CD4-positive, alpha-beta memory T cell (primary cell): ENCODE measurements at regions of chr15 and their contacts with region 1.

Region 1: DNA sequence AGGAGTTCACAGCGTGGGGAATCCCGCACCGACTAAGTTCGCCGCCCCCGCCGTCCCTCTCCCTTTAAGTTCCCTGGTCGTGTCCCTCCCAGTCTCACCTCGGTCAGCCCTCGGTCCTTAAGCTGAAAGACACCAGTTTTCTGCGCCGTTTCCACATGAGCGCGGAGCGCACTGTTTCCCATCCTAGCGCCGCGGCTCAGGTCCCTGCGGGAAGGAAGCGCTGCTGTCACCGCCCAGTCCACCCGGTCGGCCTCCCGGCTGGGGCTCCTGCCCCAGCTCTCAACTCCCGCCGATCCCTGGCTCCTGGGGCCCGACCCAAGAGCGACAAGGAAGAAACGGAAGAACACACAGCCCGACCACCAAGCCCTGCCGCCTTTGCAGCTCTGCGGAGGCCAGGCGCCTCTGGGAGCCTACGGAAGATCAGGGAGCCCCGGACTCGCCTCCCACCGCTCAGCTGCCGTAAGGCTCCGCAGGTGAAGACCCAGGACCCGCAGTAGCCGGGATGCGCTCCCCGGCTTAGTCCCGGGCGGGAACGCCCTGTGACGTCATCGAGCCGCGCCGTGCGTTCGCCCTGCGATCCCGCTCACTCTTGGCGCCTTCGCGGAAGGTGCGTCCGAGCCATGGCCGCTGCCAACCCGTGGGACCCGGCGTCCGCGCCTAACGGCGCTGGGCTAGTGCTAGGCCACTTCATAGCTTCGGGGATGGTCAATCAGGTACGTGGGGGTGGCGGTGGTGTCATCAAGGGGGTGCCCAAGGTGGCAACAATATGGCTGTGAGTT is at the starts of genes HAUS2 and LRRC57:
- DNase-seq: peak; percentile 85 to 89 (median 86)
- H3K4me3 ChIP-seq: peak within 1 kb of the TSS; percentile 92 to 99
- H3K4me3 Mint-ChIP-seq: peak within 1 kb of the TSS; percentile 93 to 100 (median 96)
- H3K27ac ChIP-seq: peak within 1 kb of the TSS; percentile 88
- H3K27ac Mint-ChIP-seq: peak within 1 kb of the TSS; percentile 87 to 100 (median 98)
- H3K4me1 ChIP-seq: peaks cover 52% of the 10 kb centered on the region
- H3K4me1 Mint-ChIP-seq: peaks cover 36 to 71% (median 53%) of the 10 kb centered on the region in 4 donors
- H3K27me3 ChIP-seq: no peaks in the 10 kb centered on the region
- H3K27me3 Mint-ChIP-seq: no peaks in the 10 kb centered on the region
- total RNA-seq, gene HAUS2: 16.4 to 20.0 TPM
- total RNA-seq, gene LRRC57: 19.0 to 20.0 TPM

Region 2: DNA sequence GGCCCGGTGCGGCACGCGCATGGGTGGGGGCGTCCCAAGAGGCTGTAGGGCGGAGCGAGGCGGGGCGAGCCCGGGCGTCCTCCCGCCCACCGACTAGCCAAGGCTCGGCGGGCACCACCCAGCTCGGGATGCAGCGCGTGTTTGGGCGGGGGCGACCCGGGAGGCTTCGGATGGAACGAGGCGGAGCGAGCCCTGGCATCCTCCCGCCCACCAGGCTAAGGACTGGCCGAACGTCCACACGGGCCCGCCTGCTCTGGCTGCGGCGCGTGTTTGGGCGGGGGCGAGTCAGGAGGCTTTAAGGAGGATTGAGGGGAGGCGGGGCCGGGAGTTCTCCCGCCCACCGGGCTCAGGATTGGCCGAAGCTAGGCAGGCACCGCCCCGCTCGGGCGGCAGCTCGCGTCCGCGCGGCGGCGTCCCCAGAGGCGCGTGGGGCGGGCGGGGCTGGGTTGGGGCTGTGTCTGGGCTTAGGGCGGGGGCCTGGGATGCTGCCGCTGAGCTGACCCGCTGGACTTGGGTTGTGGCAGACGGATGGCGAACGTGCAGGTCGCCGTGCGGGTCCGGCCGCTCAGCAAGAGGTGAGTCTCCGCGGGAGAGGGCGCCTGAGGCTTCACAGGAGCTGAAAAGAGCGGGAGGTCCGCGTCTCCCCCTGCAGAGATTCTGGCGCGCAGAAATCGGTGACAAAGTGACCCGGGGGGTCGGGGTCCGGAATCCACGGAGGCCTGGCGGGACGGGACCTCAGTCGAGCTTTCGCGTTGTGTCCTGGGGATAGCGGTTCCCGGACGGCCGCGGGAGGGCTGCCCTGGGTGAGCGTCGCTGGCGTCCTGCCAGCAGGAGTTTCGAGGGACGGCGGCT is 27.0 kb after region 1 on chr15 and contains the start of gene STARD9:
- CTCF ChIA-PET with region 1: no interaction called
- POLR2A ChIA-PET with region 1: interaction called, 60 read pairs
- intact Hi-C with region 1: loop called (anchors 1 kb)
- DNase-seq: peak; percentile 93 to 95 (median 93)
- H3K4me3 ChIP-seq: peak within 1 kb of the TSS; percentile 78 to 89
- H3K4me3 Mint-ChIP-seq: peak within 1 kb of the TSS; percentile 89 to 96 (median 92)
- H3K27ac ChIP-seq: peak within 1 kb of the TSS; percentile 44
- H3K27ac Mint-ChIP-seq: peak within 1 kb of the TSS; percentile 78 to 94 (median 86)
- H3K4me1 ChIP-seq: peaks cover 16% of the 10 kb centered on the region
- H3K4me1 Mint-ChIP-seq: peaks cover 11 to 34% (median 17%) of the 10 kb centered on the region in 4 donors
- H3K27me3 ChIP-seq: no peaks in the 10 kb centered on the region
- H3K27me3 Mint-ChIP-seq: peaks cover 6 to 12% of the 10 kb centered on the region in 2 donors
- total RNA-seq, gene STARD9: 4.5 to 6.1 TPM

Region 3: DNA sequence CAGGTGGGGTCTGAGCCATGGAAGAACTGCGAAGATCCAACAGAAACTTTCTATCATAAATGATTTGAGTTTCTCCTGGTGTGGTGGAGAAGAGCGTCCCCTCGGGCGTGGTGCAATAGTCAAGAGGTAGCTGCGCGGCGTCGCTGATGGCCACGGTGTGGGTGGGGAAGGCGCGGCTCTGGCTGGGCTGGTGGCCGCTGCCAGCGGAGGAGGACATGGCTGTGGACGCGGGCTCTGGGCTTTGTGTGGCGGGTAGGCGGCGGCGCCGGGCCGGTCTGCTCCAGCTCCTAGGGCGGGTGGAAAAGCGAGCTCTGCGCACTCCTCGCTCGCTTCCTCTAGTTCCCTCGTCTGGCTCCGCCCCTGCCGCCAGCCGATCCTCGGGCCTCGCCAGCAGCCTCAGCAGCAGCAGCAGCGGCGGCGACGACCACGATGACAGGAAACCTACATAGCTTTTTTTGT is 32.9 kb after region 1 on chr15:
- CTCF ChIA-PET with region 1: interaction called, 3 read pairs
- POLR2A ChIA-PET with region 1: interaction called, 60 read pairs
- intact Hi-C with region 1: loop called (anchors 1 kb)
- DNase-seq: peak; percentile 73 to 79 (median 77)
- H3K4me3 ChIP-seq: peak overlapping the region in 1 of 2 donors; percentile 51
- H3K4me3 Mint-ChIP-seq: peak overlapping the region; percentile 89 to 95 (median 91)
- H3K27ac ChIP-seq: peak overlapping the region; percentile 50
- H3K27ac Mint-ChIP-seq: peak overlapping the region; percentile 60 to 96 (median 94)
- H3K4me1 ChIP-seq: peaks cover 20% of the 10 kb centered on the region
- H3K4me1 Mint-ChIP-seq: peaks cover 15 to 41% (median 23%) of the 10 kb centered on the region in 4 donors
- H3K27me3 ChIP-seq: no peaks in the 10 kb centered on the region
- H3K27me3 Mint-ChIP-seq: peaks cover 6 to 11% of the 10 kb centered on the region in 2 donors

Region 4: GRCh38 chr15:42650208-42651066 is 102.0 kb after region 1 on chr15:
- CTCF ChIA-PET with region 1: interaction called, 3 read pairs
- POLR2A ChIA-PET with region 1: interaction called, 3 read pairs
- intact Hi-C with region 1: loop called (anchors 1 kb)
- DNase-seq: peak; percentile 44 to 51 (median 46)
- H3K4me3 ChIP-seq: no peak overlapping the region
- H3K4me3 Mint-ChIP-seq: no peak overlapping the region
- H3K27ac ChIP-seq: no peak overlapping the region
- H3K27ac Mint-ChIP-seq: peak overlapping the region in 1 of 7 donors; percentile 32
- H3K4me1 ChIP-seq: no peaks in the 10 kb centered on the region
- H3K4me1 Mint-ChIP-seq: peaks cover 3 to 14% (median 7%) of the 10 kb centered on the region in 4 donors
- H3K27me3 ChIP-seq: no peaks in the 10 kb centered on the region
- H3K27me3 Mint-ChIP-seq: peaks cover 0 to under 1% of the 10 kb centered on the region in 2 donors